ENCODE measurements at regions of chr11 and their contacts with region 1.

Region 1: GRCh38 chr11:9015677-9016076 is 11.9 kb upstream of the NRIP3 start:
- DNase-seq: peak; percentile 81
- CTCF ChIP-seq: peak; percentile 84

Region 2: GRCh38 chr11:9137293-9138132 is 121.8 kb after region 1 on chr11:
- in situ Hi-C with region 1: loop called (anchors 10 kb)
- DNase-seq: peak; percentile 67
- CTCF ChIP-seq: peak; percentile 96